Naive thymus-derived CD4-positive, alpha-beta T cell (primary cell): ENCODE measurements at regions of chr9 and their contacts with region 1.

Region 1: GRCh38 chr9:107316795-107317661 is 33.9 kb downstream of the RAD23B start:
- DNase-seq: no peak
- ATAC-seq: no peak
- H3K4me3 ChIP-seq: no peak overlapping the region
- H3K4me3 Mint-ChIP-seq: peak overlapping the region in 4 of 10 donors; percentile 2 to 34 (median 14)
- H3K27ac ChIP-seq: no peak overlapping the region
- H3K27ac Mint-ChIP-seq: peak overlapping the region; percentile 7 to 74 (median 47)
- H3K4me1 ChIP-seq: no peaks in the 10 kb centered on the region
- H3K4me1 Mint-ChIP-seq: peaks cover 30 to 70% (median 55%) of the 10 kb centered on the region in 7 donors
- H3K27me3 ChIP-seq: no peaks in the 10 kb centered on the region
- H3K27me3 Mint-ChIP-seq: no peaks in the 10 kb centered on the region

Region 2: GRCh38 chr9:107299437-107299836 is 17.6 kb before region 1 on chr9:
- CTCF ChIA-PET with region 1: no interaction called
- POLR2A ChIA-PET with region 1: no interaction called
- intact Hi-C with region 1: loop called in 1 of 2 experiments (anchors 2 kb)
- DNase-seq: peak in 3 of 9 donors; percentile 6 to 22 (median 21)
- ATAC-seq: no peak
- H3K4me3 ChIP-seq: no peak overlapping the region
- H3K4me3 Mint-ChIP-seq: peak overlapping the region in 1 of 10 donors; percentile 33
- H3K27ac ChIP-seq: no peak overlapping the region
- H3K27ac Mint-ChIP-seq: peak overlapping the region in 4 of 9 donors; percentile 14 to 69 (median 20)
- H3K4me1 ChIP-seq: peaks cover 4 to 13% of the 10 kb centered on the region in 2 donors
- H3K4me1 Mint-ChIP-seq: peaks cover 29 to 55% (median 42%) of the 10 kb centered on the region in 7 donors
- H3K27me3 ChIP-seq: no peaks in the 10 kb centered on the region
- H3K27me3 Mint-ChIP-seq: no peaks in the 10 kb centered on the region

Region 3: DNA sequence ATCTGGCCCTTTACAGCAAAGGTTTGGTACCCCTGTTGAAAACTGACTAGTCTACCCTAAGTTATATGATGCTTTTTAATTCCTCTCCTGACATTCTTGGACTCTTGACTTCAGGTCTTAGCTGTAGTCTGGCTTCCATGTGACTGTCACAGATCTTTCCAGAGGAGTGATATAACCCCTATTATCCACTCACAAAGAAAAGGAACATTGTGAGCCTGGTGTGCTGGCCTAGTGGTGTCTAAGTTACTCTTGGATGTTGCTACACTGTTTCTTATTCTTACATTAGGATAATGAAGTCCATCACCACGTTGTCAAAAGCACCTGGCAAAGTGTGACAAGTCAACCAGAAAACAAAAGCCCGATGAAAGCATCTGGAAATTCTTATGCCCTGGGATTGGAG is 15.9 kb after region 1 on chr9:
- CTCF ChIA-PET with region 1: no interaction called
- POLR2A ChIA-PET with region 1: no interaction called
- intact Hi-C with region 1: no loop called
- DNase-seq: no peak
- ATAC-seq: no peak
- H3K4me3 ChIP-seq: no peak overlapping the region
- H3K4me3 Mint-ChIP-seq: no peak overlapping the region
- H3K27ac ChIP-seq: no peak overlapping the region
- H3K27ac Mint-ChIP-seq: peak overlapping the region in 3 of 9 donors; percentile 34 to 49 (median 44)
- H3K4me1 ChIP-seq: no peaks in the 10 kb centered on the region
- H3K4me1 Mint-ChIP-seq: peaks cover 0 to 9% (median 0%) of the 10 kb centered on the region in 7 donors
- H3K27me3 ChIP-seq: no peaks in the 10 kb centered on the region
- H3K27me3 Mint-ChIP-seq: no peaks in the 10 kb centered on the region